ENCODE measurements at regions of chr1 and their contacts with region 1.

Region 1: GRCh38 chr1:7752512-7753417 is 18.3 kb upstream of the VAMP3 start:
- DNase-seq: peak; percentile 48
- H3K4me3 Mint-ChIP-seq: no peak overlapping the region
- H3K27ac Mint-ChIP-seq: no peak overlapping the region
- H3K4me1 Mint-ChIP-seq: peaks cover 40% of the 10 kb centered on the region
- H3K27me3 Mint-ChIP-seq: peaks cover 9% of the 10 kb centered on the region

Region 2: DNA sequence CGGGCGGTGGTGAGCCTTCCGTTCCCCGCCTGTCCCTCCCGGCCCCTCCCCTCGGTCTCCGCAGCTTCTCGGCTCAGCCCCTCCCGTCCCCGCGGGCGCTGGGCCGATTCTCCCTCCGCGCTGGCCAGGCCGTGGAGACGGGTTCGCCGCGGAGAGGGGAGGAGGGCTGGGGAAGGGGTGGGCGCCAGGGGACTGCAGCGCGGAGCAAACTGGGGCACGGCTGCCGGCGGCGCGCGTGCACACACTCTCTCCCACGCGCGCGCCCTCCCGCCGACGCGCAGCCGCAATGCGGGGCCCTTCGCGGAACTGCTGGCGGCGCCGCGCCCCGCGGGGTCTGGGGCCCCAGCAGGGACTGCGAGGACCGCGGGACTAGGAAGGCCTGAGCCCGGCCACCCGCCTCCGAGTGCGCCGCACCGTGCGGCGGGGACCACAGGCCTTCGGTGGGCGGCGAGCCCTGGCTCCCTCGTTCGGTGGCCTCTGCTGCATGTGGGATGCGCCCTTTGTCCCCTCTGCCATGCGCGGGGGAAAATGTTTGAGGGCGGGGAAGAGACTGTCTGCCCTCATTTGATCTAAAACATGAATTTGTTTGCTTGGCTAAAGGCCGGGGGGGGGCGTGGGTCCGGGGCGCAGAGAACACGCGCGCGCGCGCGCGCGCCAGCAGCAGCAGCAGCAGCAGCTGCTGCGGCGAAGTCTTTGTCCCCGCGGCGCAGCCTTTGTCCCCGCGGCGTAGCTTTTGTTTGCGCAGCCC is 72.4 kb before region 1 on chr1:
- CTCF ChIA-PET with region 1: interaction called, 14 read pairs
- POLR2A ChIA-PET with region 1: interaction called, 3 read pairs
- DNase-seq: peak; percentile 23
- H3K4me3 Mint-ChIP-seq: peak overlapping the region; percentile 64
- H3K27ac Mint-ChIP-seq: no peak overlapping the region
- H3K4me1 Mint-ChIP-seq: no peaks in the 10 kb centered on the region
- H3K27me3 Mint-ChIP-seq: peaks cover 13% of the 10 kb centered on the region

Region 3: DNA sequence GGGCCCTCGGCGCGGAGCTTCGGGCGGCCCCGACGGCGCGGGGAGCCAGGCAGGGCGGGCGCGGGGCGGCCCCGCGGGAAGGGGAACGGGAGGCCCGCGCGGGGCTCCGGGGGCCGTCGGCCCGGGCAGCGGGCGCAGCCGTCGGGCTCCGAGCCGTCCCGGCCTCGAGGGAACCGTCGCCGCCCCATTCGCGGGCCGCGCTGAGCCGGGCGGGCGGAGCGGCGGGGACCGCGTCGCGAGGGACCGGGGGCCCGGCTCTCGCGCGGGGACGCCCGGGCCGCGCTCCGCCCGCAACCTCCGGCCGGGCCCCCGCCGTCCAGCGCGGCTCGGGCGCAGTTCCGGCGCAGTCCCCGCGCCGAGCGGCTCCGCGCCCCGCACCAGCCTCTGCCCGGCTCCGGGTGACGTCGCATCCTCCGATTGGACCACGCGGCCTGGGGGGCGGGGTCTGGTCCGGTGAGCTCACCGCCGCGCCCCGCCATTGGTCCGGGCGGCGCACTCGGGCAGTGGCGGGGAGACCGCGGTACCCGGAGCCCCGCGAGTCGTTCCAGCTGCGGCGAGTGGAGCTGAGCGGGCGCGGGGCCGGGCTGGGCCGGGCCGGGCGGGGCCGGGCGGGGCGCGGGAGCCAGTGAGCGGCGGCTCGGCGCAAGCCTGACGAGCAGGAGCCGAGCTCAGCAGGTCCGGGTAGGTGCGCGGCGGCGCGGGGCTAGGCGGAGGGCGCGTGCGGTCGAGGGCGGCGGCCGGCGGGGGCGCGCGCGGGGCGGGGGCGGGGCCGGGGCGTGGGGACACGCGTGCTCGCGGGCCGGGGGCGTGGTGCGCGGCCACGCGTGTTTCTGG is 48.3 kb before region 1 on chr1:
- CTCF ChIA-PET with region 1: interaction called, 20 read pairs
- POLR2A ChIA-PET with region 1: interaction called, 3 read pairs
- DNase-seq: peak; percentile 92
- H3K4me3 Mint-ChIP-seq: peak overlapping the region; percentile 52
- H3K27ac Mint-ChIP-seq: no peak overlapping the region
- H3K4me1 Mint-ChIP-seq: peaks cover 10% of the 10 kb centered on the region
- H3K27me3 Mint-ChIP-seq: peaks cover 72% of the 10 kb centered on the region

Region 4: GRCh38 chr1:7770997-7771822 is 18.4 kb after region 1 on chr1 and contains the start of gene VAMP3:
- CTCF ChIA-PET with region 1: interaction called, 23 read pairs
- POLR2A ChIA-PET with region 1: interaction called, 5 read pairs
- DNase-seq: peak; percentile 88
- H3K4me3 Mint-ChIP-seq: peak within 1 kb of the TSS; percentile 80
- H3K27ac Mint-ChIP-seq: peak within 1 kb of the TSS; percentile 81
- H3K4me1 Mint-ChIP-seq: peaks cover 30% of the 10 kb centered on the region
- H3K27me3 Mint-ChIP-seq: peaks cover 29% of the 10 kb centered on the region
- total RNA-seq, gene VAMP3: 35.0 to 36.5 TPM